Left cardiac atrium (tissue), 4 donors: ENCODE measurements at regions of chr5 and their contacts with region 1.

Region 1: GRCh38 chr5:156595132-156595787 is 254.8 kb upstream of the PPP1R2B start:
- DNase-seq: peak; percentile 68
- ATAC-seq: peak; percentile 92 to 95

Region 2: GRCh38 chr5:156000115-156000514 is 595.1 kb before region 1 on chr5:
- intact Hi-C with region 1: no loop called
- DNase-seq: no peak
- ATAC-seq: no peak

Region 3: GRCh38 chr5:156686796-156687195 is 91.5 kb after region 1 on chr5:
- intact Hi-C with region 1: loop called in 1 of 2 experiments (anchors 10 kb)
- DNase-seq: no peak
- ATAC-seq: peak; percentile 61 to 81